Mammary epithelial cell (primary cell): ENCODE measurements at regions of chr1 and their contacts with region 1.

Region 1: GRCh38 chr1:109609881-109610280 is 9.5 kb downstream of the GNAT2 start:
- DNase-seq: no peak
- H3K4me3 ChIP-seq: no peak overlapping the region
- H3K27ac ChIP-seq: no peak overlapping the region
- H3K4me1 ChIP-seq: no peaks in the 10 kb centered on the region
- H3K27me3 ChIP-seq: no peaks in the 10 kb centered on the region
- CTCF ChIP-seq: no peak

Region 2: GRCh38 chr1:109570417-109570827 is 39.5 kb before region 1 on chr1:
- CTCF ChIA-PET with region 1: no interaction called
- dilution Hi-C with region 1: loop called (anchors 5 kb)
- in situ Hi-C with region 1: no loop called
- intact Hi-C with region 1: no loop called
- DNase-seq: peak; percentile 81
- H3K4me3 ChIP-seq: peak overlapping the region in 1 of 3 experiments; percentile 5
- H3K27ac ChIP-seq: peak overlapping the region; percentile 11
- H3K4me1 ChIP-seq: peaks cover 12% of the 10 kb centered on the region
- H3K27me3 ChIP-seq: no peaks in the 10 kb centered on the region
- CTCF ChIP-seq: no peak

Region 3: GRCh38 chr1:109589177-109589576 is 20.7 kb before region 1 on chr1:
- CTCF ChIA-PET with region 1: no interaction called
- dilution Hi-C with region 1: no loop called
- in situ Hi-C with region 1: no loop called
- intact Hi-C with region 1: no loop called
- DNase-seq: no peak
- H3K4me3 ChIP-seq: no peak overlapping the region
- H3K27ac ChIP-seq: no peak overlapping the region
- H3K4me1 ChIP-seq: no peaks in the 10 kb centered on the region
- H3K27me3 ChIP-seq: no peaks in the 10 kb centered on the region
- CTCF ChIP-seq: no peak

Region 4: DNA sequence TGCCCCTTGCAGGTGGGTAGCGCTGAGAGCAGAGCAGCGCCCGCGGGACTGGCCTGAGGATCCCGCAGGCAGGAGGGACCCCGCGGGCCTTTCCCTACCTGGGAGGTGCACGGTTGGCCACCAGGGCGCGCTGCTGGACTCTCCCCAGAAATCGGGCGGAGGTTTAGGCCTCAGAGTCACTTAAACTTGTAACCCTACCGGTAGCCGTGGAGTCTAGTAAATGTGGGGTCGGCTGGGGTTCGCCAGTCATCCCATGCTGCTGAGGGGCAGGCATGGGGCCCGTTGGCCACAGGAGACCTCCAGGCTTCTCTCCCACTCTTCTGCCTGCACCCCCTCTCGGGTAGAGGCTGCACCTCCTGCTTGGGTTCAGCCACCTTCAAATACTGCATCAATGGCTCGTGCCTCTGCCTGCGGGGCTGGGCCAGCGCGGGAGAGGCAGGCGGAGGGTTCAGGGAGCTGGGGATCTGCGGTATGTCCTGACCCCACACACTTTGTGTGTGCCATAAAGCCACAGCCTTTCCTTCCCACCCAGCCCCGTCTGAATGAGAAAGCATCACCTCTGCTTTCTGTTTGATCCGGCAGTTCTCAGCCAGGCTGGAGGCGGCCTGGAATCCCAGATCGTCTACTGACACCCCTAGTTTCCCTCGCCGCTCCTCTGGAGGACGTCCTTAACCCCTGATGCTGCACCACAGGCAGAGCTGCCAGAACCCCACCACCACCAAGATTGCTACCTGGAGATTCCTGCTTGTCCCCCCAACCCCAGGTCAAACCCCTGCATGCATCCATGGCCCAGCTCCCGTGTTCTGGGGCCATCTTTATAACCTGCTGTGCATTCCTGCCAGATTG is 33.7 kb after region 1 on chr1:
- CTCF ChIA-PET with region 1: no interaction called
- dilution Hi-C with region 1: no loop called
- in situ Hi-C with region 1: no loop called
- intact Hi-C with region 1: no loop called
- DNase-seq: peak; percentile 51
- H3K4me3 ChIP-seq: no peak overlapping the region
- H3K27ac ChIP-seq: no peak overlapping the region
- H3K4me1 ChIP-seq: no peaks in the 10 kb centered on the region
- H3K27me3 ChIP-seq: no peaks in the 10 kb centered on the region
- CTCF ChIP-seq: peak; percentile 77 to 94

Region 5: DNA sequence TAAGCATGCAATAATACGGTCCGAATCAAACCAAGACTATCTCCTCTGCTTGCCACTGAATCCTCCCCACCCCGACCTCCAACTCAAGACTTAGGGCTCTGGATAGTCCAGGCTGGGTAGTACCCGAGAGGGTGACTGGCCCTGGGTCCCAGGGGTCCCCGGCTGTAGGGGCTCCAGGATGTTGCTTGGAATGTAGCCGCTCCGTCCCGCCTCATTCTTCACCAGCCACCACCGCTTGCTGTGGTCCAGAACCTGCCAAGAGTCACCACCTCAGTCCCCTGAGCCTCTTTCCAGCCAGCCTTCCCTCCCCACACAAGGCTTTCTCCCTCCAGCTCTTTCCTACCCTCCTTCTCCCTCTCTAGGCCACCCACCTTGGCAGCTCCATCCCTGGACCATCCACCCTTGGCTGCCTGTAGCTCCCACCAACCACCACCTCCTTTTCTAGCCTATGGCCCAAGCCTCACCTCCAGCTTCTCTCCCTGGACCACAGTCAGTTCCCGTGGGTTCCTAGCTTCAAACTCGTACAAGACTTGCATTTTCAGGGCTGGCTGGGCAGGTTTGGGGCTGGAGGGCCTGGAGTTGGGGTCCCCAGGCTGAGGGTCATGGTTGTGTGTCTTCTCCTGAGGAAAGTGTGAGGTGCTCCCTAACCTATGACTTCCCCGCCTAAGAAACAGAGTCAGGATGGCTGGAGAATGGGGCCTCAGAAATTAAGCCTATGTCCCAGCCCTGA is 141.8 kb after region 1 on chr1:
- CTCF ChIA-PET with region 1: no interaction called
- dilution Hi-C with region 1: no loop called
- in situ Hi-C with region 1: no loop called
- intact Hi-C with region 1: no loop called
- DNase-seq: no peak
- H3K4me3 ChIP-seq: no peak overlapping the region
- H3K27ac ChIP-seq: no peak overlapping the region
- H3K4me1 ChIP-seq: no peaks in the 10 kb centered on the region
- H3K27me3 ChIP-seq: no peaks in the 10 kb centered on the region
- CTCF ChIP-seq: no peak